CD14-positive monocyte (primary cell): ENCODE measurements at regions of chr16 and their contacts with region 1.

Region 1: DNA sequence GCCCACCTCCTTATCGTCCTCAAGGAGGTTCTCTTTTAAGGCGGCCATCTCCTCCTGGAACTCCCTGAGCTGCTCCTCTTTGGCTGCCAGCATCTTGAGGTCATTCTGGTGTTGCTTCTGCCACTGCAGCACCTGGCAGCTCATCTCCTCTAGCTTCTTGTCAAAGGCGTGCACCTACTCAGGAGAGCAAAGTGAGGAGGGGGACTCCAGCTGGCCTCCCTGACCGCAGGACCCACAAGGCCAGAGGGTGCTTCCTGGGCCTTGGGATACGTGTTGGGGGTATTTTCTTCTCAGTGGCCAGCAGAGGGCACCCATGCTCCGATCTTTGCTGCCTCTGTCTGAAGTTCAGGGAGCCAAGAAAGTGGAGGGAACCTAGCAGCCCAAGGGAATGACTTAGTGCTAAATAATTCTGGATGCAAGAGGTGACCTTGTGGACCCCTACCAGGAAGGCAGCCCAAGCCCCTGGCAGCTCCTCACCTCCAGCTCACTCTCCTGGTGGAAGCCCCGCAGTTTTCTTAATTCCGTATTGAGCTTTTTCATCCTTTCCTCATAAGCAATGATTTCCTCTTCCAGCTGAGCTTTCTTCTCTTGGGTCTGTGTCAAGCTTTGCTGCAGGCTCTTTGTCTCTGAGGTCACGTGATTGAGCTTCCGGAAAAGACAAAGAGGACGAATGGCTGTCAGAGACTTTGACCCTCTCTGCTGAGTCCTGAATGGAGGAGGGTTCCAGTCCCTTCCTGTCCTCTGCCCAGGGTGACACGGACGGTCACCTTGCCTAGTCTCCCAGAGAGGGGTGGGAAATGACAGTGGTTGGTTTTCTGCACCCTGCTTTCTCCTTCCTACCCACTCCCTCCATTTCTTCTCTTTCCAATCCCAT is 31.4 kb downstream of the DHX38 start:
- DNase-seq: peak; percentile 72 to 80 (median 75)
- H3K4me3 ChIP-seq: peak overlapping the region in 1 of 3 experiments; percentile 34
- H3K4me3 Mint-ChIP-seq: peak overlapping the region; percentile 60 to 77
- H3K27ac ChIP-seq: peak overlapping the region; percentile 39 to 72
- H3K27ac Mint-ChIP-seq: peak overlapping the region; percentile 70 to 93 (median 86)
- H3K4me1 ChIP-seq: peaks cover 17 to 23% of the 10 kb centered on the region in 2 donors
- H3K4me1 Mint-ChIP-seq: peaks cover 24% of the 10 kb centered on the region
- H3K27me3 ChIP-seq: no peaks in the 10 kb centered on the region
- H3K27me3 Mint-ChIP-seq: peaks cover 0 to 2% (median 0%) of the 10 kb centered on the region in 3 donors
- CTCF ChIP-seq: peak; percentile 88

Region 2: GRCh38 chr16:71961066-71962039 is 163.6 kb before region 1 on chr16:
- intact Hi-C with region 1: no loop called
- DNase-seq: peak; percentile 53 to 69 (median 66)
- H3K4me3 ChIP-seq: no peak overlapping the region
- H3K4me3 Mint-ChIP-seq: no peak overlapping the region
- H3K27ac ChIP-seq: no peak overlapping the region
- H3K27ac Mint-ChIP-seq: no peak overlapping the region
- H3K4me1 ChIP-seq: peaks cover 3 to 5% of the 10 kb centered on the region in 2 donors
- H3K4me1 Mint-ChIP-seq: peaks cover 9% of the 10 kb centered on the region
- H3K27me3 ChIP-seq: no peaks in the 10 kb centered on the region
- H3K27me3 Mint-ChIP-seq: peaks cover 0 to 3% (median 2%) of the 10 kb centered on the region in 3 donors
- CTCF ChIP-seq: peak; percentile 87

Region 3: GRCh38 chr16:72085002-72085401 is 40.0 kb before region 1 on chr16:
- intact Hi-C with region 1: no loop called
- DNase-seq: no peak
- H3K4me3 ChIP-seq: no peak overlapping the region
- H3K4me3 Mint-ChIP-seq: no peak overlapping the region
- H3K27ac ChIP-seq: no peak overlapping the region
- H3K27ac Mint-ChIP-seq: no peak overlapping the region
- H3K4me1 ChIP-seq: no peaks in the 10 kb centered on the region
- H3K4me1 Mint-ChIP-seq: no peaks in the 10 kb centered on the region
- H3K27me3 ChIP-seq: no peaks in the 10 kb centered on the region
- H3K27me3 Mint-ChIP-seq: no peaks in the 10 kb centered on the region
- CTCF ChIP-seq: no peak

Region 4: GRCh38 chr16:72234387-72234786 is 109.4 kb after region 1 on chr16:
- intact Hi-C with region 1: loop called (anchors 10 kb)
- DNase-seq: no peak
- H3K4me3 ChIP-seq: no peak overlapping the region
- H3K4me3 Mint-ChIP-seq: no peak overlapping the region
- H3K27ac ChIP-seq: no peak overlapping the region
- H3K27ac Mint-ChIP-seq: no peak overlapping the region
- H3K4me1 ChIP-seq: no peaks in the 10 kb centered on the region
- H3K4me1 Mint-ChIP-seq: no peaks in the 10 kb centered on the region
- H3K27me3 ChIP-seq: no peaks in the 10 kb centered on the region
- H3K27me3 Mint-ChIP-seq: no peaks in the 10 kb centered on the region
- CTCF ChIP-seq: no peak

Region 5: GRCh38 chr16:72332926-72333325 is 207.9 kb after region 1 on chr16:
- intact Hi-C with region 1: no loop called
- DNase-seq: no peak
- H3K4me3 ChIP-seq: no peak overlapping the region
- H3K4me3 Mint-ChIP-seq: no peak overlapping the region
- H3K27ac ChIP-seq: no peak overlapping the region
- H3K27ac Mint-ChIP-seq: no peak overlapping the region
- H3K4me1 ChIP-seq: no peaks in the 10 kb centered on the region
- H3K4me1 Mint-ChIP-seq: peaks cover 4% of the 10 kb centered on the region
- H3K27me3 ChIP-seq: no peaks in the 10 kb centered on the region
- H3K27me3 Mint-ChIP-seq: peaks cover 0 to 2% (median 0%) of the 10 kb centered on the region in 3 donors
- CTCF ChIP-seq: no peak

Region 6: GRCh38 chr16:72362973-72363372 is 238.0 kb after region 1 on chr16:
- intact Hi-C with region 1: loop called in 1 of 2 experiments (anchors 10 kb)
- DNase-seq: no peak
- H3K4me3 ChIP-seq: no peak overlapping the region
- H3K4me3 Mint-ChIP-seq: no peak overlapping the region
- H3K27ac ChIP-seq: no peak overlapping the region
- H3K27ac Mint-ChIP-seq: no peak overlapping the region
- H3K4me1 ChIP-seq: no peaks in the 10 kb centered on the region
- H3K4me1 Mint-ChIP-seq: no peaks in the 10 kb centered on the region
- H3K27me3 ChIP-seq: no peaks in the 10 kb centered on the region
- H3K27me3 Mint-ChIP-seq: no peaks in the 10 kb centered on the region
- CTCF ChIP-seq: no peak

Region 7: DNA sequence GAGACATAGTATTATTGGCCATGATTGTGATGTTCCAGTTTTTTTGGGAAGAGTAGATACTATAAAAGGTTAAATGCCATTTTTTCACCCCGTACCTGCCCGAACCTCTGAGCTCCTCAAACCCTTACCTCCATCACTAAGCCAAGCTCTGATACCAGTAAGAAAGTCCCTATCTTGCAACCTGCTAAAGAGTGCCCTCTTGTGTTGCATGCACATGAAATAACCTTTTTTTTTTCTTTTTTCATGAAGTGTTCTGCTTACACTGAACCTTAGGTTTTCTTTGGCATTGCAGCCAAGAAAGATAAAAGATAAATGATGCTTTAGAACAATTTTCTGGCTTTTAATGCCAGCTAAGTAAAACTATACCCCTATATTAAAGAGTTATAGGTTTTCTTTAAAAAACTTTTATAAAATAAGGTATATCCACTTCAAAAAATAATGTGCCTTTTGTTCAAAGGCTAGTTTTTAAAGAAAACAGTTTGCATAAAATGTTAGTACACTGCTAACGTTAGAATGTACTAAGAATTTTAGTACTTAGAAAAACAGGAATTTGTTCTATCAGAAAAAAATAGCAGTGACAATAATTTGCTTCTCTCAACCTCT is 342.3 kb after region 1 on chr16:
- intact Hi-C with region 1: loop called (anchors 2 to 10 kb)
- DNase-seq: peak; percentile 1 to 21 (median 10)
- H3K4me3 ChIP-seq: no peak overlapping the region
- H3K4me3 Mint-ChIP-seq: no peak overlapping the region
- H3K27ac ChIP-seq: no peak overlapping the region
- H3K27ac Mint-ChIP-seq: no peak overlapping the region
- H3K4me1 ChIP-seq: no peaks in the 10 kb centered on the region
- H3K4me1 Mint-ChIP-seq: peaks cover 5% of the 10 kb centered on the region
- H3K27me3 ChIP-seq: no peaks in the 10 kb centered on the region
- H3K27me3 Mint-ChIP-seq: no peaks in the 10 kb centered on the region
- CTCF ChIP-seq: peak; percentile 41